Activated T-helper 1 cell treated with anti-CD3 and anti-CD28 coated beads, Interleukin-12 subunit alpha, Interleukin-12 subunit beta, Interleukin-2, Interleukin-4 antibody, amounts not matched to agents 30 ng/mL and 10 ng/mL and 1 ng/mL, durations not matched to agents 14 hours and 24 hours and 36 hours (primary cell): ENCODE measurements at regions of chr1 and their contacts with region 1.

Region 1: GRCh38 chr1:192808518-192809306 is at the start of gene RGS2:
- DNase-seq: peak; percentile 84
- H3K4me3 Mint-ChIP-seq: peak within 1 kb of the TSS; percentile 93
- H3K27ac Mint-ChIP-seq: peak within 1 kb of the TSS; percentile 91
- H3K4me1 Mint-ChIP-seq: peaks cover 43% of the 10 kb centered on the region
- H3K27me3 Mint-ChIP-seq: peaks cover under 1% of the 10 kb centered on the region
- total RNA-seq, gene RGS2: 11.3 and 12.1 TPM in 2 replicates

Region 2: GRCh38 chr1:192516776-192517297 is 291.9 kb before region 1 on chr1:
- intact Hi-C with region 1: loop called (anchors 1 kb)
- DNase-seq: peak; percentile 67
- H3K4me3 Mint-ChIP-seq: peak overlapping the region; percentile 79
- H3K27ac Mint-ChIP-seq: peak overlapping the region; percentile 92
- H3K4me1 Mint-ChIP-seq: peaks cover 58% of the 10 kb centered on the region
- H3K27me3 Mint-ChIP-seq: peaks cover 4% of the 10 kb centered on the region

Region 3: GRCh38 chr1:192904438-192904895 is 95.8 kb after region 1 on chr1:
- intact Hi-C with region 1: loop called (anchors 10 kb)
- DNase-seq: no peak
- H3K4me3 Mint-ChIP-seq: peak overlapping the region; percentile 9
- H3K27ac Mint-ChIP-seq: no peak overlapping the region
- H3K4me1 Mint-ChIP-seq: no peaks in the 10 kb centered on the region
- H3K27me3 Mint-ChIP-seq: peaks cover 12% of the 10 kb centered on the region

Region 4: GRCh38 chr1:193019442-193020026 is 210.8 kb after region 1 on chr1:
- intact Hi-C with region 1: loop called (anchors 1 kb)
- DNase-seq: no peak
- H3K4me3 Mint-ChIP-seq: no peak overlapping the region
- H3K27ac Mint-ChIP-seq: no peak overlapping the region
- H3K4me1 Mint-ChIP-seq: no peaks in the 10 kb centered on the region
- H3K27me3 Mint-ChIP-seq: no peaks in the 10 kb centered on the region

Region 5: DNA sequence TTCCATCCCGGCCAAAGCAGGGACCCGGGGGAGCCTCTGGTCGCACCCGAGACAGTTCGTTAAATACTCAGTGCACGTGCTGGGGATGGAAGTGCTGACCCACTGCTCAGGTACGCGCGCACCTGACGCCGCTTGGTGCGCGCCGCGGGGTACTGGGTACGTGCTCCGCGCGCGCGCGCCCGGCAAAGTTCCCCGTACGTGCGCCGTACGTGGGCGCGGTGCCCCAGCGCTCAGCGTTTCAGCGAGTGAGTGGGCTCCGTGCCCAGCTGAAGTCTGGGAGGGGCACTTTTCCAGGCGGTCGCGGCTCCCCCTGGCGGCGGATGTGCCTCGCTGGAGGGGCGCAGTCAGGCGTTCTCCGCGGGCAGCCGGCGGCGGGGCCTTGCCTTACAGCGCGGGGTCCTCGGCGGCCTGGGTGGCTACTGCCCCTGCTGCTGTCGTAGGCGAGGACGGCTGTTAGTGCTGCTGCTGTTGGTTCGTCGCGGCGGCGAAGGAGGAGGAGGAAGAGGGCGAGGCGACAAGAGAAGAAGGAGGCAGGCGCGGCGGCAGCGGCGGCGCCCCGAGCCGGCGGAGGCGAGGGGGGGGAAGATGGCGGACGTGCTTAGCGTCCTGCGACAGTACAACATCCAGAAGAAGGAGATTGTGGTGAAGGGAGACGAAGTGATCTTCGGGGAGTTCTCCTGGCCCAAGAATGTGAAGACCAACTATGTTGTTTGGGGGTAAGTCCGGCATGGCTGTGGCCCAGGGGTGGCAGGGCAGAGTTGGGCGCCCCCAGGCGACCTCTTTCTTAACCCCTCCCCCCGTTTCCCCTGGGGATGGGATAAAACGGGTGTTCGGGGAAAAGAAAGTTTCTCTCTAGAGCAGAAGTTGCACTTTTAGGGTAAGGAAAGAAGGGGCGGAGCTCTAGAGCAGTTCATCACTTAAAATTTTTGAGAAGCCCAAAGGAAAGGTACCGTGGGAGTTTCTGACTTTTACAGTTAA is 313.2 kb after region 1 on chr1 and contains the start of gene CDC73:
- intact Hi-C with region 1: loop called (anchors 1 kb)
- DNase-seq: peak; percentile 97
- H3K4me3 Mint-ChIP-seq: peak within 1 kb of the TSS; percentile 92
- H3K27ac Mint-ChIP-seq: peak within 1 kb of the TSS; percentile 88
- H3K4me1 Mint-ChIP-seq: peaks cover 62% of the 10 kb centered on the region
- H3K27me3 Mint-ChIP-seq: peaks cover 15% of the 10 kb centered on the region
- total RNA-seq, gene CDC73: 56.1 and 57.3 TPM in 2 replicates

Region 6: GRCh38 chr1:193569096-193569982 is 760.6 kb after region 1 on chr1:
- intact Hi-C with region 1: loop called (anchors 2 kb)
- DNase-seq: peak; percentile 26
- H3K4me3 Mint-ChIP-seq: peak overlapping the region; percentile 25
- H3K27ac Mint-ChIP-seq: peak overlapping the region; percentile 81
- H3K4me1 Mint-ChIP-seq: peaks cover 36% of the 10 kb centered on the region
- H3K27me3 Mint-ChIP-seq: no peaks in the 10 kb centered on the region